Left ventricle myocardium inferior (tissue), 1 donor: ENCODE measurements at regions of chr10 and their contacts with region 1.

Region 1: GRCh38 chr10:35126530-35127296 is at the start of gene CREM:
- DNase-seq: peak; percentile 100
- H3K4me3 ChIP-seq: peak within 1 kb of the TSS; percentile 92
- H3K27ac ChIP-seq: peak within 1 kb of the TSS; percentile 100
- H3K4me1 ChIP-seq: peaks cover 57% of the 10 kb centered on the region
- H3K27me3 ChIP-seq: no peaks in the 10 kb centered on the region
- CTCF ChIP-seq: peak; percentile 92
- total RNA-seq, gene CREM: 58.5 TPM

Region 2: GRCh38 chr10:34768261-34768971 is 358.3 kb before region 1 on chr10:
- intact Hi-C with region 1: no loop called
- DNase-seq: peak; percentile 83
- H3K4me3 ChIP-seq: peak overlapping the region; percentile 37
- H3K27ac ChIP-seq: peak overlapping the region; percentile 62
- H3K4me1 ChIP-seq: peaks cover 68% of the 10 kb centered on the region
- H3K27me3 ChIP-seq: no peaks in the 10 kb centered on the region
- CTCF ChIP-seq: no peak

Region 3: GRCh38 chr10:34835908-34836508 is 290.7 kb before region 1 on chr10:
- intact Hi-C with region 1: no loop called
- DNase-seq: no peak
- H3K4me3 ChIP-seq: no peak overlapping the region
- H3K27ac ChIP-seq: no peak overlapping the region
- H3K4me1 ChIP-seq: no peaks in the 10 kb centered on the region
- H3K27me3 ChIP-seq: peaks cover 18% of the 10 kb centered on the region
- CTCF ChIP-seq: no peak

Region 4: DNA sequence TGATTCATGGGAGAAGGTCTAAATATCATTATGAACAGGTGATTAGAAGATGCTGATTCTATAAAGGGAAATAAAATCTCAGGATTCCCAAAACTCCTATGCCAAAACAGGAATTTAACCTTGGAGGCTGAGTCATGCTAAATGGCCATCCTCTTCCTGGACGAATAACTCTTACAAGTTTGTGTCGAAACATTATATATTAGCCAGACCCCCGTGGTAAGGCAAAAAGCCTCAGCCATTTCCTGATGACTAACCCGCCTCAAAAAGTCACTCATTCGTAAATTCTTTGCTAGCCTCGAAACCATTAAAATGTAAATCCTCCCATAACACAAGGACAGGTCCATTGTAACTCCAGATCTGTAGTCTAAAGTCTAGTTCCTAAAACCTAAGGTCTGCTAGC is 68.6 kb before region 1 on chr10:
- intact Hi-C with region 1: no loop called
- DNase-seq: no peak
- H3K4me3 ChIP-seq: no peak overlapping the region
- H3K27ac ChIP-seq: no peak overlapping the region
- H3K4me1 ChIP-seq: no peaks in the 10 kb centered on the region
- H3K27me3 ChIP-seq: no peaks in the 10 kb centered on the region
- CTCF ChIP-seq: no peak

Region 5: GRCh38 chr10:35218339-35218955 is 91.7 kb after region 1 on chr10:
- intact Hi-C with region 1: loop called (anchors 2 kb)
- DNase-seq: peak; percentile 69
- H3K4me3 ChIP-seq: no peak overlapping the region
- H3K27ac ChIP-seq: peak overlapping the region; percentile 77
- H3K4me1 ChIP-seq: peaks cover 39% of the 10 kb centered on the region
- H3K27me3 ChIP-seq: no peaks in the 10 kb centered on the region
- CTCF ChIP-seq: peak; percentile 84